ENCODE measurements at regions of chr18 and their contacts with region 1.

Region 1: GRCh38 chr18:54269893-54270844 is 852 bp downstream of the POLI start:
- DNase-seq: peak; percentile 75
- H3K4me3 Mint-ChIP-seq: peak overlapping the region; percentile 76
- H3K27ac Mint-ChIP-seq: peak overlapping the region; percentile 90
- H3K4me1 Mint-ChIP-seq: peaks cover 13% of the 10 kb centered on the region
- H3K27me3 Mint-ChIP-seq: no peaks in the 10 kb centered on the region
- CTCF ChIP-seq: peak; percentile 45

Region 2: DNA sequence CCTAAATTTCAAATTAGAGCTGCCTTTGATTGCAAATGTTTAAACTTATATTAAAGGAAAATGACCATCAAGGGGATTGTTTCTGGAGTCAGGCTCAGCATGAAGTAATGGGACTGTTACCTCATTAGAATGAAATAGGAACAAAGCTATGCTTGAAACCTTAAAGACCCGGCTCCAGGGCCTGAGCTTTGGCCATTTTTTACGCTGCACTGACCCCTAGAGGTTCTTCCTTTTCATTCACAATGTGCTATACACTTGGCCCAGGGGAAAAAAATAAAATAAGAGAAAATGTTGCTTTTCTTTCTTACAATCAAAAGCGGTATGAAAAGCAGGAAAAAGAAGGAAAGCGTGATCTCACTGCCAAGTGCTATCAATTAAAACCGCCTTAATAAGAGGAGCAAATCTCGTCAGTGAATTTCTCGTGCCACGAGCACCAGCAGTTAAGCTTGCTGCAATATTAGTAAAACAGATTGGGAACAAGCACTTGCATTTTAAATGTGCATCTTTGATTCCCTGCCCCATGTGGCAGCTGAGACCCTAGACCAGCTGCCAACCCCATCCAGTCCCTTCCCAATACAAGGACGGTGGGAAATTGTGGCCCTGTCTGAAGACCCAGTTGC is 142.3 kb before region 1 on chr18:
- CTCF ChIA-PET with region 1: interaction called, 8 read pairs
- POLR2A ChIA-PET with region 1: interaction called, 5 read pairs
- intact Hi-C with region 1: loop called (anchors 5 kb)
- DNase-seq: peak; percentile 67
- H3K4me3 Mint-ChIP-seq: no peak overlapping the region
- H3K27ac Mint-ChIP-seq: no peak overlapping the region
- H3K4me1 Mint-ChIP-seq: peaks cover 9% of the 10 kb centered on the region
- H3K27me3 Mint-ChIP-seq: no peaks in the 10 kb centered on the region
- CTCF ChIP-seq: peak; percentile 59

Region 3: DNA sequence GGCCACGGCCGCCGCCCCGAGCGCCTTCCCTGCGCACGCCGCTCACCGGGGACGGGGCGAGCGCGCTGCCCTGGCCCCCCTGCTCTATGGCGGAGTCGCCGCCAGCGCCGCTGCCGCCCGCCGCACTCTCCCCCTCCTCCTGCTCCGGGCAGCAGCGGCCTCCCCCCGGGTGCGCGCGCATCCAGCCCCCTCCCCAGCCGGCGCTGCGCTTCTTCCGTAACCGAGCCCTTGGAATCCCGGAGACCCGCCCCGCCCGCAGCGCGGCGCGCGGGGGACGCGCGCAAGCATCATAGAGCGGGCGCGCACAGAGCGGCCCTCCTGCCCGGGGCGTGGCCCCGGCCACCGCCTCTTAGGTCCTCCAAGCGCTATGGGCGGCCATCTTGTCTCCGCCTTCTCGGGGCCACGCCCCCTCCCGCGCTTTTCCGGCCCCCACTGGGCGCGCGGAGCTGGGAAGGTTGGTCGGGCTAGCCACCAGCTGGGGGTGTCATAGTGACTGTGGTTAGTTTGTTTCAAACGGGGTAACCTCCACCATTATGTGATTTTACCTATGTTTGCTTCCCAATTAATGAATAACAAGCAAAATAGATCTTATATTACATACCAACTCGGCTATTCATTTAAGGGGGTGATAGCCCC is 45.7 kb before region 1 on chr18 and contains the start of gene MBD2:
- CTCF ChIA-PET with region 1: interaction called, 79 read pairs
- POLR2A ChIA-PET with region 1: interaction called, 109 read pairs
- intact Hi-C with region 1: loop called (anchors 1 kb)
- DNase-seq: peak; percentile 95
- H3K4me3 Mint-ChIP-seq: peak within 1 kb of the TSS; percentile 93
- H3K27ac Mint-ChIP-seq: peak within 1 kb of the TSS; percentile 97
- H3K4me1 Mint-ChIP-seq: peaks cover 11% of the 10 kb centered on the region
- H3K27me3 Mint-ChIP-seq: no peaks in the 10 kb centered on the region
- CTCF ChIP-seq: no peak
- total RNA-seq, gene MBD2: 179 and 194 TPM in 2 replicates

Region 4: DNA sequence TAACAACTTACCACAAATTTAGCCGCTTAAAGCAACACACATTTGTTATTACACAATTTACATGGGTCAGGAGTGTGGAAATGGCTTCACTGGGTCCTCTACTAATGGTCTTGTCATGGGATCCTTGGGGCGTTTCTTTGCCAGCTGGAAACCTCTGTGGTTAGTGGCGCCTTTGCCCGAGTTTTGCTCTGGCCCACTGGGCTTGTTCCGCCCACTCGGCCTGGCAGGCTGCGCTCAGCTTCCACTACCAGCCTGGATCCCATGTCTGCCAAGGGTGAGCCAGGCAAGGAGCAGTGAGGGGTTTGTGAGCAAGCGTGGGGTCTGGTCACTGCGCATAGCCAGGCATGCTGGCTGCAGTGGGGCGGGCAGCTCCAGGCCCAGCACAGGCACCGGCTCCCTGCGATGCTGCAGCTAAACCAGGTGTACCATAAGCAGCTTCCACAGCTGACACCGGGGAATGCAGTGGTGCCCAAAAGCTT is 29.5 kb before region 1 on chr18:
- CTCF ChIA-PET with region 1: interaction called, 16 read pairs
- POLR2A ChIA-PET with region 1: interaction called, 9 read pairs
- intact Hi-C with region 1: no loop called
- DNase-seq: peak; percentile 32
- H3K4me3 Mint-ChIP-seq: no peak overlapping the region
- H3K27ac Mint-ChIP-seq: no peak overlapping the region
- H3K4me1 Mint-ChIP-seq: no peaks in the 10 kb centered on the region
- H3K27me3 Mint-ChIP-seq: no peaks in the 10 kb centered on the region
- CTCF ChIP-seq: no peak

Region 5: DNA sequence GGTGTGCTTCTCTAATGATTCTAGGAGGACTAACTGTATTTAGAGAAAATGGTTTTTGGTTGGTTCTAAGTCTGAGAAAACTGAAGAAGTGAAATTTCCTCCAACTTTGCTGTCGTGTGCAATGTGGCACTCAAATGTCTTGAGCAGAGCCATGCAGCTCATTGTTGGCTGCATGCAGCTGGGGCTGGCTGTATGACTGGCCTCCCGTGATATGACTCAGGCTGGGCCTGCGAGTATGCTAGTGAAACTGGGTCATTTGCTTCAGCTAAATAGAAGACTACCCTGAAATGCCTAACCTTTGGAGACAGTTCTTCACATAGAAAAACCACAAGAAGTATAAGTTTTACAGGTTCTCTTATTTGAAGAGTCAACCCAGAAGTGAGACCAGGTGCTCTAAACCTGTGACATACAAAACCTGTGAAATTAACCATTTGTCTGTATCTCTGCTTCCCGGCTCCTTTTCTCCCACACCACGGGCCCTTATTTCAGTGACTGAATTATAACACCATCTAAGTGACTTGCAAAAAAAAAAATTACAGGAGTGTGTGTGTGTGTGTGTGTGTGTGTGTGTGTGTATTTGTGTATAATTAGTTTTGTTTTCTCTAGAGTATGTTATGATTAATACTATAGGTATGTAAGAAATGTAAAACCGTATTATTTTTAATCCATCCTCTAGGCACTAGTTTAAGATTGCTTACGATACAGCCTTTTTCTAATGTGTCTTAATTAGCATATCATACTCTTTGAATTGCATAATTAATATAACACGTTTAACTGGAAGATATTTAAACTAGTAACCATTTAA is 15.0 kb after region 1 on chr18:
- CTCF ChIA-PET with region 1: interaction called, 12 read pairs
- POLR2A ChIA-PET with region 1: interaction called, 10 read pairs
- intact Hi-C with region 1: no loop called
- DNase-seq: peak; percentile 59
- H3K4me3 Mint-ChIP-seq: no peak overlapping the region
- H3K27ac Mint-ChIP-seq: peak overlapping the region; percentile 66
- H3K4me1 Mint-ChIP-seq: peaks cover 12% of the 10 kb centered on the region
- H3K27me3 Mint-ChIP-seq: no peaks in the 10 kb centered on the region
- CTCF ChIP-seq: no peak

Region 6: DNA sequence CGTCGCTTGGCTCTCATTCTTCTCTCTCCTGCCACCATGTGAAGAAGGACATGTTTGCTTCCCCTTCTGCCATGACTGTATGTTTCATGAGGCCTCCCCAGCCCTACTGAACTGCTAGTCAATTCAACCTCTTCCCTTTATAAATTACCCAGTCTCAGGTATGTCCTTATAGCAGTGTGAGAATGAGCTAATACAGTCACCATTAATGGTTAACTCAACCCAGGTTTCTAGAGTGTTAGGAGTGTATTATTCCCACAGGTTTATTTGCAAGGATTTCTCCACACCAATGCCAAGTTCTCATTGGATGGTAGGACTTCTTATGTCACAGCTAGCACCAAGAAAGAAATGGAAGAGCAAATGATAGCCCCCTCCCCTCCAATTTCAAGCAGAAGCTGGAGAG is 392.8 kb after region 1 on chr18:
- CTCF ChIA-PET with region 1: no interaction called
- POLR2A ChIA-PET with region 1: no interaction called
- intact Hi-C with region 1: no loop called
- DNase-seq: no peak
- H3K4me3 Mint-ChIP-seq: no peak overlapping the region
- H3K27ac Mint-ChIP-seq: no peak overlapping the region
- H3K4me1 Mint-ChIP-seq: no peaks in the 10 kb centered on the region
- H3K27me3 Mint-ChIP-seq: no peaks in the 10 kb centered on the region
- CTCF ChIP-seq: no peak

Measured in MCF 10A (cell line).